ENCODE measurements at regions of chr17 and their contacts with region 1.

Region 1: DNA sequence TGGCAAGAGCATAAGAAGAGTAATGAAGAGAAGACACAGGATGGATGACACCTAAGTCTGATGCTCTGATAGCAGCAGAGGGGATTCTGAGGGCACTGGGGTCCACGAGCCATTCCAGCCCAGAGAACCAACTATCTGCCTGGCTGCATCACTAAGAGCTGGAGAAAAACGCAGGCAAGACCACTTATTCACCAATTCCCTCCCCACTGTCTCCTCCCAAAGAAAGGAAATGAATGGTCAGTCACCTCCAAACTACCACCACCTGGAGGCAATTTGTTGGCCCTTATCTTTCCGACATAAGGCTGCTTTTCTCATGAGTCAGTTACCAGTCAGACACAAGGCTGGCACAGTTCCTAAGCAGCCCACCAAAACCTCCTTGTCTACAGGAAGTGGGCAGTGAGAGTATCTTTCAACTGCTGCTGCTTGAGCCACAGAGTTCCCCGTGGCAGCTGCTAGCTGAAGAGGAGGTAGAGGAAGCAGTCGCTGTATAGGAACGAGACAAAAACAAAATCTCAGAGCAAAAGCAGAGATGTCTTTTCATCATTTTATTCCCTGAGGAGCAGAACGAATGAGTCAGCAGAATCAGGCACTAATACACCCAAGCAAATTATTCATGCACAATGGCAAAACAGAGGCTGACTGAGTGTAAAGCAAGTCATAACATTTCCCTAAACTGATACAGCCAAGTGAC is 111.1 kb downstream of the SMG6 start:
- DNase-seq: peak; percentile 79
- H3K4me3 Mint-ChIP-seq: no peak overlapping the region
- H3K27ac Mint-ChIP-seq: peak overlapping the region; percentile 68
- H3K4me1 Mint-ChIP-seq: peaks cover 59% of the 10 kb centered on the region
- H3K27me3 Mint-ChIP-seq: no peaks in the 10 kb centered on the region

Region 2: GRCh38 chr17:2172077-2172851 is 20.2 kb before region 1 on chr17:
- CTCF ChIA-PET with region 1: no interaction called
- POLR2A ChIA-PET with region 1: no interaction called
- intact Hi-C with region 1: no loop called
- DNase-seq: no peak
- H3K4me3 Mint-ChIP-seq: no peak overlapping the region
- H3K27ac Mint-ChIP-seq: no peak overlapping the region
- H3K4me1 Mint-ChIP-seq: no peaks in the 10 kb centered on the region
- H3K27me3 Mint-ChIP-seq: no peaks in the 10 kb centered on the region

Region 3: DNA sequence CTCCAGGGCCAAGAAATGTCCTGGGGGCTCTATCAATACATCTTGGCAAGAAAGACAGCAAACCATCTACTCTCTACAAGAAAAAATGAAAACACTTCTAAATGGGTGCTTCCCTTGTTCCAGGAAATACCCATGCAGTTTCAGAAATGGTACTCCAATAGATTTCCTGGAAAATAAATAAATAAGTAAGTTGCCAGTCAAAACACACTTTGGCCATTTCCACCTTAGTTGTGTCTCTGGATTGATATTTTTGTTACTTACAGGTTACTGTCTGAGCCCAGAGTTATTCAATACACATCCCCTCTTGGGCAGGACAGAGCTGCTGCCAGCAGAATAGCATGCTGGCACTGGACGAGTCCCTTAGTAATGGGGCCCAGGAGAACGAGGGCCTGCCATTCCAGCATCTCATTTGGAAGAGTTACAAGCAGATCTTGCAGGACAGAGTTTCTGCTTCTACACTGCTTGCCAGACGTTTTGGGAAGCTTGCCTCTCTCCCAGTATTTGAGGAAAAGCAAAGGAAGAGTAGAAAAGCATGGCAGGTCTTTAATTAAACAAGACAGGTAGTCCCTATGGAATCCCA is 10.6 kb after region 1 on chr17:
- CTCF ChIA-PET with region 1: no interaction called
- POLR2A ChIA-PET with region 1: no interaction called
- intact Hi-C with region 1: no loop called
- DNase-seq: no peak
- H3K4me3 Mint-ChIP-seq: no peak overlapping the region
- H3K27ac Mint-ChIP-seq: peak overlapping the region; percentile 50
- H3K4me1 Mint-ChIP-seq: peaks cover 19% of the 10 kb centered on the region
- H3K27me3 Mint-ChIP-seq: no peaks in the 10 kb centered on the region

Region 4: DNA sequence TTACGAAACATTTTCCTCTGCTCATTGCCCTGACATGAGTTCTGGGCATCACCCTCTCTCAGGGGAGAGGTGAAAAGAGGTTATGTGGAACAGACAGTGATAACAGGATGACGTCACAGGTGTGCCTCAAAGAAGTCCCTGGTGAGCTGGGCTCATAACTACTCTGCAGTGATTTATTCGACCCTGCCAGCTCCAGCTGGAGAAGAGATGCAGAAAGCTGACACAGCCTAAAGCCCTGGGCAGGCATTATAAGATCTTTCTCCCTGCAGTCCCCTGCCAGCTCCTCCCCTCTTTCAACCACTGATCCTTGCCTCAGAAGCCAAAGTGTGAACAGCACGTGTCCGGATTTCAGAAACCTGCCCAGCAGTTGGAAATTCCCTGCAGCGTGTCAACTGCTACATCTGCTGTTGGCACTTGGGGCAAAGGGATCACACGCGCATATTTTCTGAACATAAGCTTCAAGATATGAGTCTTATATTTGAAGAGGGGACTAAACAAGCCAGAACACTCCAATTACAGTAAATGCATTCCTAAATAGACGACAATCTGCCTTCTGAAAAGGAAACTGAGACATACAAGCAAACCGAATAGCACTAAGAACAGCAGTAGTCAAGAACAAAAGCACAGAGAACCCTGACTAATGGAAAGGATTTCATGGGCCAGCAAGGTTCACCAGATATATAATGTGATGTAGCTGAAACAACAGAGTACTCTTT is 30.5 kb after region 1 on chr17:
- CTCF ChIA-PET with region 1: interaction called, 4 read pairs
- POLR2A ChIA-PET with region 1: interaction called, 7 read pairs
- intact Hi-C with region 1: loop called (anchors 1 kb)
- DNase-seq: peak; percentile 81
- H3K4me3 Mint-ChIP-seq: peak overlapping the region; percentile 57
- H3K27ac Mint-ChIP-seq: peak overlapping the region; percentile 83
- H3K4me1 Mint-ChIP-seq: peaks cover 37% of the 10 kb centered on the region
- H3K27me3 Mint-ChIP-seq: no peaks in the 10 kb centered on the region

Region 5: DNA sequence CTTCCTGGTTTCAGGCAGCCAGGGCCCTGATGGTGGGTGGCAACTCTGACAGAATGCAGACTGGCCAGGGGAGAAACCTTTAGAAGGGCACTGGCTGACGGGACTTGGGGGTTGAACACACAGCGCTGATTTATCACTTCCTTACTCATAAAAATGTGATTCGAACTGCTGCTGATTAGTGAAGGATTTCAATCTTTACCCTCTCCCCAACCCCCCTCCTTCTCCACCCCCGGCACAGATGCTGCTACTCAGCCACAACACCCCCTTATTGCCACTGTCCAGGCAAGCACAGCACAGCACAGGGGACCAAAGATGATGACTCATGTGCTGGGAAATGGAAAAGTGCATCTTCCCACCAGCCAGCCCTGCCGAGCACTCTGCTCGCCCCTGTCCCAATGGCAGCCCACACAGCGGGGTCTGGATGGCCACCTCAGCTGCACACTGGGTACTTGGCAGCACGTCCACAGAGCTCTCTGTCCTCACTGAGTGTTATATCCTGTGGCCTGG is 41.0 kb after region 1 on chr17:
- CTCF ChIA-PET with region 1: no interaction called
- POLR2A ChIA-PET with region 1: no interaction called
- intact Hi-C with region 1: no loop called
- DNase-seq: no peak
- H3K4me3 Mint-ChIP-seq: no peak overlapping the region
- H3K27ac Mint-ChIP-seq: peak overlapping the region; percentile 51
- H3K4me1 Mint-ChIP-seq: peaks cover 36% of the 10 kb centered on the region
- H3K27me3 Mint-ChIP-seq: no peaks in the 10 kb centered on the region